Activated CD4-positive, alpha-beta memory T cell treated with anti-CD3 and anti-CD28 coated beads for 36 hours (primary cell): ENCODE measurements at regions of chr18 and their contacts with region 1.

Region 1: DNA sequence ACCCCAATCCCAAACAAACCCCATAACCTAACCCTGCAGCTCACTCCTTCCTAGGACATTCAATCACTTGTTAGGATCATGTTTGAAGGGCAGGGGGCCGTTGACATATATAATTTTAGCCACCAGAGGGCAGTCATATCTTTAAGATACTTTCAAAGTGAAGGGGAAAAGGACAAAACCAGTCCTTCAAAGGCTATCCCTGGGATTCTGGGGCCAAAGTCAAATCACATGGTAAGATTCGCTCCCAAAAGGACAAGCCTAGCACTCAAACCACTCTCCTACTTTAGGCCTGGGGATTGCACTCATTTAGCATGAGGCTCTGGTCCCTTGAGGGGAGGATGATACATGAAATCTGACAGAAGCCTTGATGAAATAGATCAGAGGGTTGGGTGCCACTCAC is 44.6 kb downstream of the HAUS1 start:
- DNase-seq: peak; percentile 54
- H3K4me3 Mint-ChIP-seq: no peak overlapping the region
- H3K27ac Mint-ChIP-seq: no peak overlapping the region
- H3K4me1 Mint-ChIP-seq: peaks cover 32% of the 10 kb centered on the region
- H3K27me3 Mint-ChIP-seq: no peaks in the 10 kb centered on the region

Region 2: DNA sequence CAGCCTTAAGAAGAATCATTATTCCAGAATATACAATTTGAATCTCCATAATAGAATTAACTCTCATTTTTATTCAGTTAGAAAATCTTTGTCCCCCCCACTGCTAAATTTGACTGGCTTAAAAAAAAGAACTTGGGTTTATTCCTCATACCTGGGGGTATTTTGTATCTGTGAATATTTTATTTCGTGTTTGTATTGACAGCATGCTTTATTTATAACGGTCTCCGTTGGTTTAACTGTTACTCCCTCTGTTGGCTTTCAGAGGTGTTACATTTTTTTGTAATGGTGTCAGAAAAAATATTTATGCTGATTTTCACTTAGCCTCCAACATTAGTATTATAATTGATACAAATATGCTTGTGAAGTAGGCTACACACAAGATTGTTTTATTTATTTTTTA is 64.5 kb after region 1 on chr18:
- CTCF ChIA-PET with region 1: interaction called, 6 read pairs
- POLR2A ChIA-PET with region 1: no interaction called
- intact Hi-C with region 1: loop called (anchors 1 kb)
- DNase-seq: no peak
- H3K4me3 Mint-ChIP-seq: no peak overlapping the region
- H3K27ac Mint-ChIP-seq: no peak overlapping the region
- H3K4me1 Mint-ChIP-seq: peaks cover 86% of the 10 kb centered on the region
- H3K27me3 Mint-ChIP-seq: no peaks in the 10 kb centered on the region

Region 3: DNA sequence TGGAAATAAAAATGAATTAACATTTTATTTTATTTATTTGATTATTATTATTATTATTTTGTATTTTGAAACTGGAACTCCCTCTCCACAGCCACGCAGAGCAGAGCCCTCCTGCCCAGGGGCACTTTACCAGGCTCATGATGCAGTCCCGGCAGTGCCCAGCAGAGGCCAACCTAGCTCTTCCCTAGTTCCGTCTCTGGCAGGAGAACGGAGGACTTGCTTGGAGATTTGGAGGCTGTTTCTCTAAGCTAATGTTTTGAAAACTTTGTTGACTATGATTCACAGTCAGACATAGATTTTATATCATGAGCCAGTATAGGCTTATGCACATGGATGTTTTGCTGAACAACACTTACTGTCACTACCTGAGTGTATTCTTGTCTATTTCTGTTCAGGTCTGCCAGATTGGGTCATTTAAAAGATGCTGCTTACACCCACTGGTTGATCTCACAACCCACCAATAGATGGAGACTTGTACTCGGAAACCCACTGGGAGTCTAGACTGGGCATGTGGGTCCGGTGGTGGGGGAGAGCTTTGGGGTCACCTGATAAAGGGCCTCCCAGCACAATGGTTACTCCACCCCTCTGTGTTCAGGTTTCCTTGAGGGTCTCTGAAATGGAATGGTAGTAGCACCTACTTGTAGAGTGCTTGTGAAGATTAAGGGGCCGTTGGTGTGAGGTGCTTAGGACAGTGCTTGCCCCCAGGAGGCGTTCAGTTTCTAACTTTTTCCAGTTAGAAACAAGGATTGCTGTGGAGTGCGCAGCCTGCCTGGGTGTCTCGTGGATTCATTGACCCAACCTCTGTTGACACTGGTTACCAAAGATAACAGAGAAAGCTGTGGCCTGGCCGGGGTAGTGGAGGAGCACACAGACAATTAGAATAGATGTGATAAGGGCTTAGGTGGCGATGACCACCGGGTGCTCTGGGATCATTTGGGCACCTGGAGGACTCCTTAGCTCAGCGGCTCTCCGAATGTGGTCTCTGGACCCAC is 132.7 kb after region 1 on chr18:
- CTCF ChIA-PET with region 1: interaction called, 10 read pairs
- POLR2A ChIA-PET with region 1: no interaction called
- intact Hi-C with region 1: no loop called
- DNase-seq: peak; percentile 77
- H3K4me3 Mint-ChIP-seq: no peak overlapping the region
- H3K27ac Mint-ChIP-seq: no peak overlapping the region
- H3K4me1 Mint-ChIP-seq: peaks cover 17% of the 10 kb centered on the region
- H3K27me3 Mint-ChIP-seq: no peaks in the 10 kb centered on the region

Region 4: GRCh38 chr18:46481048-46481846 is 332.4 kb after region 1 on chr18:
- CTCF ChIA-PET with region 1: interaction called, 7 read pairs
- POLR2A ChIA-PET with region 1: no interaction called
- intact Hi-C with region 1: loop called (anchors 1 kb)
- DNase-seq: peak; percentile 64
- H3K4me3 Mint-ChIP-seq: no peak overlapping the region
- H3K27ac Mint-ChIP-seq: no peak overlapping the region
- H3K4me1 Mint-ChIP-seq: no peaks in the 10 kb centered on the region
- H3K27me3 Mint-ChIP-seq: peaks cover 2% of the 10 kb centered on the region